Heart right ventricle (tissue), 16 donors: ENCODE measurements at regions of chr20 and their contacts with region 1.

Region 1: GRCh38 chr20:64119681-64120341 is 12.4 kb upstream of the NPBWR2 start:
- DNase-seq: no peak
- ATAC-seq: peak in 5 of 8 donors; percentile 10 to 46 (median 27)
- H3K4me3 ChIP-seq: peak overlapping the region in 4 of 10 donors; percentile 22 to 36 (median 29)
- H3K27ac ChIP-seq: no peak overlapping the region
- H3K4me1 ChIP-seq: peaks cover 0 to 10% (median 0%) of the 10 kb centered on the region in 9 donors
- H3K27me3 ChIP-seq: peaks cover 0 to 32% (median 25%) of the 10 kb centered on the region in 7 donors
- CTCF ChIP-seq: no peak

Region 2: DNA sequence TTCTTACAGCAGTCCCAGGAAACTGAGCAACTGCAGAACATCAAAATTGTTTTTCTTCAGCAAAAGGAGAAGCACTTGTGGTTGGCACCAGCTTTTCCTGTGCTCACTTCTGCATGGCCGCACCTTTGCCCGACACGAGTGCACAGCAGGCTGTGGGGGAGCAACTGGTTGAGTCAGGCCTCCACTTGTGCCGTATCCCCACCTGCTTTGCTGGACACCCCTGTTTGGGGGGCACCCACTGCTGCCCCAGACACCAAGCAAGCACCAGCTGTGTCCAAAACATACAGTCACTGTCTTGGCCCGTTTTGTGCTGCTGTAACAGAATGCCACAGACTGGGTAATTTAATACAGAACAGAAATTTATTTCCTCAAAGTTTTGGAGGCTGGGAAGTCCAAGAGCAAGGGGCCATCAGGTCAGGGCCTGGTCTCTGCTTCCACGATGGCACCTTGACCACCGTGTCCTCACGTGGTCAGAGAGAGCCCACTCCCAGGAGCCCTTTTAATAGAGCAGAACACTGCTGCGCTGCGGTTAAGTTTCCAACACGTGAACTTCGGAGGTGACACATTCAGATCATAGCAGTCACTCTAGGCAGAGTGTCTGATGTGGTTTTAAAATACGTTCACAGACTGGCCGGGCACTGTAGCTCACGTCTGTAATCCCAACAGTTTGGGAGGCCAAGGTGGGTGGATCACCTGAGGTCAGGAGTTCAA is 484.2 kb before region 1 on chr20:
- intact Hi-C with region 1: no loop called
- DNase-seq: no peak
- ATAC-seq: peak in 1 of 8 donors; percentile 31
- H3K4me3 ChIP-seq: no peak overlapping the region
- H3K27ac ChIP-seq: peak overlapping the region in 2 of 10 donors; percentile 29 to 87
- H3K4me1 ChIP-seq: peaks cover 0 to 72% (median 14%) of the 10 kb centered on the region in 9 donors
- H3K27me3 ChIP-seq: no peaks in the 10 kb centered on the region
- CTCF ChIP-seq: no peak

Region 3: DNA sequence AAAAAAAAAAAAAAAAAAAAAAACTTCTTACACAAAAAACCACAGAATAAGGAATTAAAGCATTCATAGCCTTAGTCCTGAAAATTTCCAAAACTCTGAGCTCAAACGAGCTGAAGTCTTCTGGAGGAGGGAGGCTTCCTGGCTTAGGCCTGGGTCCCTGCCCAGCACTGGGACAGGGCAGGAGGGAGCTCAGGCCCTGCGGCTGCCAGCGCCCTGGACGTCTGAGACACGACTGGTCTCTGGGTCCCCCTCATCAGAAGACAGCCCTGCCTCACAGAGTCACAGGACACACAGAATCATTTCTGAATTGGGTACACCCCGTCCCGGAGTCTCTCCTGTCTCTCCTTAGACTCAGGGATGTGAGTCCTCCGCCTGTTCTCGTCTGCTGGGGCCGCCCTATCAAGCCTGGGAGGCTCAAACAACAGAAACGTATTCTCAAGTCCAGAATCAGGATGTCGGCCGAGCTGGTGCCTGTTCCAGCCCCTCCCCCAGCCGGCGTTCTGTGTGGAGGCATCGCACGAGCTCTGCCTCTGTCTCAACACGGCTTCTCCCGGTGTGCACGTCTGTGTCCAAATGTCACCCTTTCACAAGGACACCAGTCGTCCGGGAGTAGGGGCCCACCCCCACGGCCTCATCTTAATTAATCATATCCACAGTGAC is 328.2 kb before region 1 on chr20:
- intact Hi-C with region 1: no loop called
- DNase-seq: peak; percentile 64 to 66
- ATAC-seq: peak in 7 of 8 donors; percentile 19 to 55 (median 37)
- H3K4me3 ChIP-seq: peak overlapping the region in 2 of 10 donors; percentile 12 to 15
- H3K27ac ChIP-seq: peak overlapping the region; percentile 22 to 84 (median 77)
- H3K4me1 ChIP-seq: peaks cover 18 to 74% (median 54%) of the 10 kb centered on the region in 9 donors
- H3K27me3 ChIP-seq: peaks cover 0 to 4% (median 0%) of the 10 kb centered on the region in 7 donors
- CTCF ChIP-seq: no peak

Region 4: DNA sequence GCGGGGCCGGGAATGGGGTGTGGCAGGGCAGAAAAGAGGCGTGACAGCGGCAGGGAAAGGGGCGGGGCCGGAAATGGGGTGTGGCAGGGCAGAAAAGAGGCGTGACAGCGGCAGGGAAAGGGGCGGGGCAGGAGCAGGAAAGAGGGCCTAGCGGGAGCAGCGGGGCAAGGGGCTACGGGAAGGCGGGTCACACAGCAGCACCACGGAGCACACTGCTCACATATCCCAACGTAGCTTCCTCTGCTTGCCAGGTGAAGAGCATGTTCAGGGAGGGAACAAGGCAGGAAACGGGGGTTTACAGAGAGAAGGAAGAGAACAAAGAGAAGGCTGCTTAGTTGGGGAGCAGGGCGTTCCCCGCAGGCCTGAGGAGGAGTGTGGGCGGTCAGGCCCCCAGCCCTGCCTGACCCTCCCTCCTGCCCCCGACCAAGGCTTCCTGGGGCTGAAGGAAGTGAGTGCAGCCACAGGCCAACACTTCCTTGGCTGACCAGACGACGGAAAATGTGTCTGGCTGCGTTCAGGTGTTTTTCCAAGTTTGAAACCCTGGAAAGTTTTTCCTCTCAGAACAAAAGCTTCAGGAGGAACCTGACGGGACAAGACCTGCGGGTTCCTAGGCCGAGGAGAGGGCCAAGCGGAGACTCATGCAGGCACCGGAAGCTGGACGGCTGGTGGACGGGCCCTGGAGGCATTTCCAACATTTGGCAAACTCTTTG is 177.4 kb before region 1 on chr20:
- intact Hi-C with region 1: no loop called
- DNase-seq: peak in 1 of 2 donors; percentile 35
- ATAC-seq: peak in 5 of 8 donors; percentile 18 to 55 (median 41)
- H3K4me3 ChIP-seq: no peak overlapping the region
- H3K27ac ChIP-seq: peak overlapping the region; percentile 27 to 84 (median 70)
- H3K4me1 ChIP-seq: peaks cover 16 to 51% (median 40%) of the 10 kb centered on the region in 9 donors
- H3K27me3 ChIP-seq: no peaks in the 10 kb centered on the region
- CTCF ChIP-seq: no peak

Region 5: DNA sequence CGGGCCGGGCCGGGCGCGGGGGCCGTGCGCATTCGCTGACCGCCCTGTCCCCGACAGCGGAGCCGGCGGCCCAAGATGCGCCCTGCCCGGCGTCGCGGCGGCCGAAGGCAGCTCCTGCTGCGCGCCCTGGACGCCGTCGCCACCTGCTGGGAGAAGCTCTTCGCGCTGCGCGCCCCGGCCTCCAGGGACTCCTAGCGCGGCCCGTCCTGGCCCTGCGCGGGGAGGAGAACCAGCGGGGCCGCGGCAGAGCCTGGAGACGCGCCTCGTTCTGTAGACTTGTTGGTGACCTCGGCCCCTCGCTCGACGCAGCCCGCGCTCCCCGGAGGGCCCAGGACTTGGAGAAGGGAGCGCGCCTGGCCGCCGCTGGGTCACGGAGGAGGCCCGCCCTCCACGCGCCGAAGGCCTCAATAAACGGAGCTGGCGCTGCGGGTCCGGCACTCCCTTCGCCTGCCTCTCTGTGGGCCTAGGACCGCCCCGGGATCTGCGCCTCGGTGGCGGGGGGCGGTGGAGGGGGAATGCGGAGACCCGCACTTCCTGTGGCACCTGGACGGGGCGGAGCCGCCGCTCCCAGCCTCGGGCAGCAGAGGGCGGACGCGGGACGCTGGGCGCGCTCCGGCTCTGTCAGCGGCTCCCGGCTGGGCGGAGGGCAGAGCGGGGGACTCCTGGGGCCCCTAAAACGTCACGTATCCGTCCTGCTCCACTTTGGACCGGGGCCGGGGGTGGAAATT is 81.1 kb before region 1 on chr20:
- intact Hi-C with region 1: loop called in 8 of 10 experiments (anchors 2 to 10 kb)
- DNase-seq: peak; percentile 83 to 92
- ATAC-seq: peak; percentile 82 to 91 (median 87)
- H3K4me3 ChIP-seq: peak overlapping the region; percentile 26 to 66 (median 57)
- H3K27ac ChIP-seq: peak overlapping the region; percentile 55 to 96 (median 84)
- H3K4me1 ChIP-seq: peaks cover 17 to 68% (median 56%) of the 10 kb centered on the region in 9 donors
- H3K27me3 ChIP-seq: peaks cover 3 to 77% (median 58%) of the 10 kb centered on the region in 7 donors
- CTCF ChIP-seq: peak; percentile 46 to 84 (median 76)

Region 6: DNA sequence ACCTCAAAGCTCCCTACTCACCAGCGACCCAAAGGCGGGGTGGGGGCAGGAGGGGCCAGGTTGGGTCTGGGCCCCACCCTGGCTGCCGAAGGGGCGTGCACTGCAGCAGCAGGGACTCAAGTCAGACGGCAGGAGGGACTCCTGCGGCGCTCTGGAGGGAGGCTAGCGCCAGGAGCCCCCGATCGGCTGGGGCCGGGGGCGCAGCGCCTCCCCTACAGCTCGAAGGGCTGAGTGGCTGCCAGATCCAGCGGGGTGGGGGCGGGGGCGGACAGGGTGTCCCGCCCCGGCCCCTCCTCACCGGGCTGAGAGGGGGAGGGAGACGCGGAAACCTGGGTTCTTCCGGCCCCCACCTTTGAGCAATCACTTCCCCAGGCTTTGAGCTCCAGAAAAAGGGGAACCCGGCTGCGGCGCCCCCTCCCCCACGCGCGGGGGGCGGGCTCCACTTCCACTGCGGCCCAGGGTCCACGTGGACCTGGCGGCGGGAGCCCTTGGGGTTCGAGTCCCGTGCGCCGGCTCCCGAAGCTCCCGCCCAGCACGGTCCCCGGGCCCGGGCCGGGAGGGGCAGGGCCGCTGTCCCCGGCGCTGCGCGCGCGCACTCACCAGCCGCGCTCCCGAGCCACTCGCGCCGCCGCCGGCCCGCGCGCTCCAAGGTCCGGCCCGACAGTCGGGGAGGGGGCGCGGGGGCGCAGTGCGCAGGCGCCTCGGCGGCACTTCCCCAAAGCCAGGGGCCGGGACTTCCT is 40.4 kb before region 1 on chr20 and contains the start of gene RGS19:
- intact Hi-C with region 1: loop called in 5 of 10 experiments (anchors 5 kb)
- DNase-seq: peak; percentile 76 to 83
- ATAC-seq: peak; percentile 19 to 75 (median 58)
- H3K4me3 ChIP-seq: peak within 1 kb of the TSS; percentile 57 to 94 (median 84)
- H3K27ac ChIP-seq: peak within 1 kb of the TSS; percentile 67 to 95 (median 86)
- H3K4me1 ChIP-seq: peaks cover 16 to 58% (median 41%) of the 10 kb centered on the region in 9 donors
- H3K27me3 ChIP-seq: peaks cover 0 to 9% (median 8%) of the 10 kb centered on the region in 7 donors
- CTCF ChIP-seq: no peak
- total RNA-seq, gene RGS19: 1.8 to 13.1 (median 3.3) TPM

Region 7: GRCh38 chr20:64168381-64169090 is 48.7 kb after region 1 on chr20:
- intact Hi-C with region 1: no loop called
- DNase-seq: no peak
- ATAC-seq: no peak
- H3K4me3 ChIP-seq: no peak overlapping the region
- H3K27ac ChIP-seq: no peak overlapping the region
- H3K4me1 ChIP-seq: no peaks in the 10 kb centered on the region
- H3K27me3 ChIP-seq: peaks cover 0 to 94% (median 80%) of the 10 kb centered on the region in 7 donors
- CTCF ChIP-seq: no peak